ENCODE measurements at regions of chr2 and their contacts with region 1.

Region 1: DNA sequence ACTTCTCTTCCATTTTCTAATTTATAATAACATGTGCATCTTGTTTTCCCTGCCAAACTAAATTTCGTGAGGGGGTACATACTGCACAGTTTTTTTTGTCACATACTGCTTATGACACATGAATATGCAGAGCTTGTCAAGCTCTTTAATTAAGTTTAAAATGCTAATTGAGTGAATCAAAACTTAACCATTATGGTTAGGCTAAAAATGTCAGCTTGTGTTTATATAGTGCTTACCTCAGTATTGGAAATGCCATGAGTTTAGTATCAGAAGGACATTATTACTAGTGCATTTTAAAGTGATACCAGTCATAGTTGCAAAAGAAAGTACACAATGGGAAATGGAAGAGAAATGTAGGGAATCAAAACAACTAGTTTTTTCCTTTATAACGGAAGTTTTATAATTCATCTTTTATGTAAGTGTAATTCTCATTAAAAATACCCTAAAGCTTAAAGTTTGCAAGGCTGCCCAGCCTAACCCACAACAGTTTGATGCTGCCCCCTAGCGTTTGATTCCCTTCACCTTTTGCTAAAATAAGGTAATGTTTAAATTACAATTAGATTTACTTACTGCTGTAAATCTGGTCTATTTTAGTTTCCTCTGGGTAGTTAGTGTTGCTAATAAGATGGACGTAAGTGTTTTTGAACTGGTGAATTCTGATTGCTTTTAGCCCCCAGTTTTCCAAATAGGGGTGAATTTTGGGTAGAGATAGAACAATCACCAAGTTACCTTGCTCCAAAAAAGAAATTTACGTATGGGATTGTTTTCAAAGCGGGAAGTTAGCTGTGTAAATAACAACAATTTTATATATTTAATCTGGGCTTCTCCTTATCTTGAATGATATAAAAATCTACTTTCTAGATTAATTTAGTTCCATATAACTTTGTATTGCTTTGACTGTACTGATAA is 3.2 kb downstream of the SLC39A10 start:
- DNase-seq: peak; percentile 21
- H3K4me3 ChIP-seq: peak overlapping the region; percentile 98
- H3K27ac ChIP-seq: peak overlapping the region; percentile 99
- H3K4me1 ChIP-seq: peaks cover 45% of the 10 kb centered on the region
- H3K27me3 ChIP-seq: no peaks in the 10 kb centered on the region
- CTCF ChIP-seq: peak; percentile 88

Region 2: GRCh38 chr2:195051401-195051800 is 608.8 kb before region 1 on chr2:
- intact Hi-C with region 1: no loop called
- DNase-seq: no peak
- H3K4me3 ChIP-seq: no peak overlapping the region
- H3K27ac ChIP-seq: no peak overlapping the region
- H3K4me1 ChIP-seq: no peaks in the 10 kb centered on the region
- H3K27me3 ChIP-seq: no peaks in the 10 kb centered on the region
- CTCF ChIP-seq: no peak

Region 3: DNA sequence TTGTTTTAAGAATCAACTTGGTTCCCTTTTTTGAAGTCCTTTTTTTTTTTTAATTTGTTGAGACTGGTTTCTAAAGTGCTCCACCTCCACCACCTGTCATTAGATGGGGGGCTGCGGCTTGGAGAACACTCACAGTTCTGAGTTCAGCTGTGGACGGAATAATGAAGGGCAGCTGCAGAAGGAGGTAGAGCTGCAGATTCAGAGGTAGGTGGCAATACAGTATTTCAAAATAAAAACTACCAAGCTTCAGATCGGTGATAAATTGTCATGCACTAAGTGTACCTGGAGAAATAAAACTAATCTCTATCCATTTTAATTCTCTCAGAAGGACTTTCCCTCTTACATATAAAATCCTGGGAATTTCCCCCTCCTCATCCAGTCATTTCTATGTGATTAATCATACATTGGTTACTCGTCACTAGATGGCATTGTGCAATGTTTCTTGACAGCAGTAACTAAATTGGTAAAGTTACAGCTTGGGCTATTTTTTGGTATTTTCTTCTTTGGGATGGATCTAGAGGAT is 84.3 kb before region 1 on chr2:
- intact Hi-C with region 1: loop called (anchors 5 kb)
- DNase-seq: no peak
- H3K4me3 ChIP-seq: no peak overlapping the region
- H3K27ac ChIP-seq: no peak overlapping the region
- H3K4me1 ChIP-seq: peaks cover 9% of the 10 kb centered on the region
- H3K27me3 ChIP-seq: no peaks in the 10 kb centered on the region
- CTCF ChIP-seq: peak; percentile 48

Region 4: GRCh38 chr2:196068271-196069209 is 408.3 kb after region 1 on chr2 and contains the start of gene DNAH7:
- intact Hi-C with region 1: loop called (anchors 10 kb)
- DNase-seq: peak; percentile 90
- H3K4me3 ChIP-seq: peak within 1 kb of the TSS; percentile 93
- H3K27ac ChIP-seq: peak within 1 kb of the TSS; percentile 49
- H3K4me1 ChIP-seq: peaks cover 15% of the 10 kb centered on the region
- H3K27me3 ChIP-seq: peaks cover under 1% of the 10 kb centered on the region
- CTCF ChIP-seq: peak; percentile 75
- total RNA-seq, gene DNAH7: 0.11 TPM

Measured in left ventricle myocardium inferior (tissue), 1 donor.